ENCODE measurements at regions of chr3 and their contacts with region 1.

Region 1: GRCh38 chr3:159293493-159293892 is 491.6 kb downstream of the MFSD1 start:
- DNase-seq: no peak
- H3K4me3 ChIP-seq: no peak overlapping the region
- H3K27ac ChIP-seq: no peak overlapping the region
- H3K4me1 ChIP-seq: no peaks in the 10 kb centered on the region
- H3K27me3 ChIP-seq: no peaks in the 10 kb centered on the region
- CTCF ChIP-seq: no peak
- EP300 ChIP-seq: no peak
- POLR2A ChIP-seq: no peak

Region 2: DNA sequence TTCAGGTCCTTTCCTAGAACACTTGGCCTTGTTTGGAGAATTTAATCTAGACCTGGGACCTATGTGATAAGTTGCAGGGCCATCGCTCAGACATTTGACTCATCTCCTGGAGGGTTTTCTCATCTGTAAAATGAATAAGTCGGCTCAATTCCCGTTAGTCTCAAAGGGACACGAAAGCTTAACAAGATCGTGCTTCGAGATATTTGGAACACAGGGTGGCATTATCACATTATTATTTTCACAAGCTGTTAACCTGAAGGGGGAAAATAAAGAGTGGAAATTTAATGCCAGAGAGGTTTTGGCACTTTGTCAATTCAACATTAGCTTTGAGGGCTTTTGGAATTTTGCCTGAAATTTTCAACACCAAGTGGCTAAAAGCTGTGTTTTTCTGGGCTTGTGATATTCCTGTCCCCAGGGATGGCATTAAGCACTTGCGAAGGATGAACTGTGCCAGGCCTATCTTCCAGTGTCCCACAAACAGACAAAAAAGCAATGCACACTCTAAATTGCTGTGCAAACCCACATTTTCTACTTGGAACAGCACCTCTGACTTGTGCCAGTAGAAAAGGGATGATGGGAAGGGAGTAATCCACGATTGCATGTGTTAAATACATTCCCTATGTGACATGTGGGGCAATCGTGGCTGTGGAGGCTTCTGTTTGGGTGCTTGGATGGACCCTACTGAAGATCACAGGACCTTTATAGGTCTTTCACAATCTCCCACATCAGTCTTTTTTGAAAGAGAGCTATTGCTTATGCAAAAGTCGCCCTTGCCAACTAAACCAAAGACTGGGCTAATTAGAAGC is 12.9 kb before region 1 on chr3:
- intact Hi-C with region 1: loop called (anchors 1 kb)
- DNase-seq: no peak
- H3K4me3 ChIP-seq: no peak overlapping the region
- H3K27ac ChIP-seq: no peak overlapping the region
- H3K4me1 ChIP-seq: no peaks in the 10 kb centered on the region
- H3K27me3 ChIP-seq: no peaks in the 10 kb centered on the region
- CTCF ChIP-seq: no peak
- EP300 ChIP-seq: no peak
- POLR2A ChIP-seq: no peak

Region 3: GRCh38 chr3:160841455-160841854 is 1548.0 kb after region 1 on chr3:
- intact Hi-C with region 1: no loop called
- DNase-seq: no peak
- H3K4me3 ChIP-seq: no peak overlapping the region
- H3K27ac ChIP-seq: no peak overlapping the region
- H3K4me1 ChIP-seq: peaks cover 3 to 26% (median 16%) of the 10 kb centered on the region in 4 donors
- H3K27me3 ChIP-seq: no peaks in the 10 kb centered on the region
- CTCF ChIP-seq: no peak
- EP300 ChIP-seq: no peak
- POLR2A ChIP-seq: no peak